ENCODE measurements at regions of chr1 and their contacts with region 1.

Region 1: DNA sequence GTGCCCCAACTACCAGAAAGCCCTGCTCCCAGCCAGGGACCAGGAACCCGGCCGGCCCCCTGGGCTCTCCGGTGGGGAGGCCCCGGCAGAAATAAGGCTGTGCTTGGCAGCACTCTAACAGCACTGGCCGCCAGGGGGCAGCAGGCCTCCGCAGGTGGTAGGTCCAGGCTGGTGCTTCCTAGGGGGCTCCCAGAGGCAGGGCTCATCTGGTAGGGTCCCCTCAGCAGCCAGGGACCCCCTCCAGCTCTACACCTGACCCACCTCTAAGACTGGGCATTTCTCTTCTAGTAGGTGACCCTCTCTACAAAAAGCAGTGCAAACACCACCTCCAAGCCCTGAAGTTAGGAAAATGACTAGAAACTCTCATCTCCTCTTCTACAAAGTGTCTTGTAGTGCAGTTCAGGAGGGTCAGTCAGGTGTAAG is 85.6 kb downstream of the STUM start:
- DNase-seq: peak; percentile 77 to 93 (median 86)
- H3K4me3 ChIP-seq: no peak overlapping the region
- H3K27ac ChIP-seq: peak overlapping the region in 57 of 59 donors; percentile 1 to 87 (median 66)
- H3K27me3 ChIP-seq: no peaks in the 10 kb centered on the region
- CTCF ChIP-seq: peak; percentile 78 to 99 (median 96)

Region 2: GRCh38 chr1:226679853-226680516 is 45.8 kb after region 1 on chr1:
- intact Hi-C with region 1: loop called (anchors 5 to 10 kb)
- DNase-seq: peak; percentile 73 to 88 (median 80)
- H3K4me3 ChIP-seq: peak overlapping the region in 58 of 59 donors; percentile 23 to 70 (median 49)
- H3K27ac ChIP-seq: peak overlapping the region in 49 of 59 donors; percentile 78 to 99 (median 96)
- H3K27me3 ChIP-seq: no peaks in the 10 kb centered on the region
- CTCF ChIP-seq: peak in 1 of 56 donors; percentile 15

Region 3: GRCh38 chr1:226702957-226703831 is 69.0 kb after region 1 on chr1:
- intact Hi-C with region 1: loop called in 1 of 2 experiments (anchors 1 kb)
- DNase-seq: peak; percentile 52 to 90 (median 68)
- H3K4me3 ChIP-seq: peak overlapping the region; percentile 52 to 87 (median 72)
- H3K27ac ChIP-seq: peak overlapping the region; percentile 90 to 100 (median 99)
- H3K27me3 ChIP-seq: no peaks in the 10 kb centered on the region
- CTCF ChIP-seq: peak in 33 of 56 donors; percentile 1 to 55 (median 25)

Region 4: DNA sequence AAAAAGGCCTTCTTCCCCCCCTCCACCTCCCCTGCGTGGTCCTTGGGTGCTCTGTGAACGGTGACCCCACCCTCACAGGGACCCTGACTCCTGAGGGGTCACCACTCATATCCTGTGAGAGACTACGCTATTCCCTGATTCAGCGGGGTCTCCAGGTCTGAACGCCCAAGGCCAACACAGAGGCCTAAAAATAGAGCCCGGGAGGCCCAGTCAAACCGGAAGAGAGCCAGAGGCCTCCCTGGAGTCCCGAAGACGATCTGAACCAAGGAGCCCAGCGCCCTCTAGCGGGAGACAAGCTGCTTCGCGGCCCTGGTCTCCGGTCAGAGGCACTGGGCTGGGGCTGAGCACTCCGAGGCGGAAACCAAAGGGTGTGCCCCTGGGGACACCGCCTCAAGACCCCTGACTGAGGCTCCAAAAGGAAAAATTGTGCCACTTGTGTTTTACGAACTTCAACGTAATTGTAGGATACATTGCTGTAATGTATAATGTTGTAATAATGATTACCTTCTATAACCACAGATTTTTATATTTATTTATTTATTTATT is 193.9 kb after region 1 on chr1:
- intact Hi-C with region 1: loop called (anchors 1 to 2 kb)
- DNase-seq: peak; percentile 88 to 94 (median 92)
- H3K4me3 ChIP-seq: peak overlapping the region in 42 of 59 donors; percentile 0 to 54 (median 26)
- H3K27ac ChIP-seq: peak overlapping the region in 57 of 59 donors; percentile 2 to 92 (median 77)
- H3K27me3 ChIP-seq: no peaks in the 10 kb centered on the region
- CTCF ChIP-seq: peak; percentile 88 to 100 (median 98)

Region 5: GRCh38 chr1:226838456-226838855 is 204.3 kb after region 1 on chr1:
- intact Hi-C with region 1: no loop called
- DNase-seq: no peak
- H3K4me3 ChIP-seq: no peak overlapping the region
- H3K27ac ChIP-seq: no peak overlapping the region
- H3K27me3 ChIP-seq: no peaks in the 10 kb centered on the region
- CTCF ChIP-seq: no peak